Common myeloid progenitor, CD34-positive (primary cell): ENCODE measurements at regions of chr15 and their contacts with region 1.

Region 1: GRCh38 chr15:65374821-65375401 is 2.9 kb downstream of the IGDCC3 start:
- DNase-seq: no peak
- H3K4me3 ChIP-seq: no peak overlapping the region
- H3K27ac ChIP-seq: no peak overlapping the region
- H3K4me1 ChIP-seq: peaks cover 0 to 22% (median 14%) of the 10 kb centered on the region in 4 experiments
- H3K27me3 ChIP-seq: peaks cover 19 to 74% (median 31%) of the 10 kb centered on the region in 5 experiments

Region 2: GRCh38 chr15:65384895-65385858 is 10.3 kb after region 1 on chr15:
- CTCF ChIA-PET with region 1: interaction called, 52 read pairs
- POLR2A ChIA-PET with region 1: no interaction called
- DNase-seq: peak; percentile 75 to 87 (median 81)
- H3K4me3 ChIP-seq: peak overlapping the region; percentile 10 to 74 (median 44)
- H3K27ac ChIP-seq: no peak overlapping the region
- H3K4me1 ChIP-seq: peaks cover 0 to 12% (median 11%) of the 10 kb centered on the region in 4 experiments
- H3K27me3 ChIP-seq: peaks cover 0 to 37% (median 24%) of the 10 kb centered on the region in 5 experiments

Region 3: GRCh38 chr15:65434201-65434600 is 59.3 kb after region 1 on chr15:
- CTCF ChIA-PET with region 1: no interaction called
- POLR2A ChIA-PET with region 1: no interaction called
- DNase-seq: no peak
- H3K4me3 ChIP-seq: no peak overlapping the region
- H3K27ac ChIP-seq: no peak overlapping the region
- H3K4me1 ChIP-seq: no peaks in the 10 kb centered on the region
- H3K27me3 ChIP-seq: no peaks in the 10 kb centered on the region

Region 4: DNA sequence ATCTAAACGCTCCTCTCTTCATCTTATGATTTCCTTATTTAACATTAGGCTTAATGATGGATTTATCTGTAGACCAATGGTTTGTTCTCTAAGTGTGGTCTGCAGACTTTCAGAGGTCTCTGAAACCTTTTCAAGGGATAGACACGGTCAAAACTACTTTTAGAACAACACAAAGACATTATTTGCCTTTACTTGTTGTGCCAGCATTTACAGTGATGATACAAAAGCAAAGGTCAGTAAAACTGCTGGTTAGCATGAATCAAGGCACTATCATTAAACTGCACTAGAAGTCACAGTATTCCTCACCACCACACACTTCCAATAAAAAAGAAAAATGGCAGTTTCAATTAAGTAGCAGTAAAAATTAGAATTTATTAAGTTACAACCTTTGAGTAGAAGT is 72.2 kb after region 1 on chr15:
- CTCF ChIA-PET with region 1: no interaction called
- POLR2A ChIA-PET with region 1: no interaction called
- DNase-seq: no peak
- H3K4me3 ChIP-seq: no peak overlapping the region
- H3K27ac ChIP-seq: no peak overlapping the region
- H3K4me1 ChIP-seq: peaks cover 0 to 9% (median 0%) of the 10 kb centered on the region in 4 experiments
- H3K27me3 ChIP-seq: no peaks in the 10 kb centered on the region